CD4-positive, alpha-beta memory T cell (primary cell): ENCODE measurements at regions of chr2 and their contacts with region 1.

Region 1: DNA sequence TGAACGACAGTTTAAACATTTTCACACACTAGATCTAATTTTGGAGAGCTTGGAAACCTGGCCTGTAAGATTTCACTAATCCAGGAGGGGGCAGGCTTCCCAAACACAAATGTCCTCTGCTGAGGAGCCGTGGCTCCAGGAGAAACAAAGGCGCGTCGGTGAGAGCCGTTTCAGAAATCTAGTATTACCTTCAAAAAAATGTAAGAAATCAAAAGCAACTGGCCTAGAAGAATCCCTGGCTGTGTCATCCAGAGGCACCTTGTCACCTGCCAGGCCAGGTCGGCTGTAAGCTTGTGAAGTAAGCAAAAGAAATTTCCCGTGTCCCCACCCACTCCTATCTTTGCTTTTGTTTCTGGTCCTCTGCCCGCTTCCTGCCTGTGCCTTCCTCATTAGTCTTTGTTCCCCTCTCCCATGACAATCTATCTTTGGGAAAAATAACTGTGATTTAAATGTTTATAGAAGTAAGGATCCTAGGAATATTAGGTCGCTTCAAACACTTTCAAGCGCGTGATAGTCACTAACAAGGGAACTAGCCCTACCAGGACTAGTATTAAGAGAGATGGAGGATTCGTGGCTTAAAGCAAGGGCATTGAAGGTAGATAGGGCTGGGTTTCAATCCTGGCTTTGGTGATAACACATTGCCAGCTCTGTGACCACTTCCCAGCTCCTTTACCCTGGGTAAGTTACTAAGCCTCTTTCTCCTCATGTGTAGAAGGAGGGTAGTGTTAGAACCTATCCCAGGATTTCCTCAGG is 99.5 kb upstream of the STK39 start:
- DNase-seq: peak; percentile 63 to 69 (median 64)
- H3K4me3 ChIP-seq: peak overlapping the region in 1 of 2 donors; percentile 51
- H3K4me3 Mint-ChIP-seq: peak overlapping the region; percentile 83 to 95 (median 88)
- H3K27ac ChIP-seq: no peak overlapping the region
- H3K27ac Mint-ChIP-seq: peak overlapping the region in 3 of 7 donors; percentile 64 to 81 (median 76)
- H3K4me1 ChIP-seq: no peaks in the 10 kb centered on the region
- H3K4me1 Mint-ChIP-seq: peaks cover 5 to 7% (median 6%) of the 10 kb centered on the region in 4 donors
- H3K27me3 ChIP-seq: no peaks in the 10 kb centered on the region
- H3K27me3 Mint-ChIP-seq: peaks cover under 1 to 7% of the 10 kb centered on the region in 2 donors

Region 2: GRCh38 chr2:168184681-168185513 is 162.0 kb before region 1 on chr2:
- CTCF ChIA-PET with region 1: no interaction called
- POLR2A ChIA-PET with region 1: no interaction called
- intact Hi-C with region 1: no loop called
- DNase-seq: no peak
- H3K4me3 ChIP-seq: no peak overlapping the region
- H3K4me3 Mint-ChIP-seq: no peak overlapping the region
- H3K27ac ChIP-seq: no peak overlapping the region
- H3K27ac Mint-ChIP-seq: no peak overlapping the region
- H3K4me1 ChIP-seq: peaks cover 42% of the 10 kb centered on the region
- H3K4me1 Mint-ChIP-seq: peaks cover 45 to 78% (median 56%) of the 10 kb centered on the region in 4 donors
- H3K27me3 ChIP-seq: no peaks in the 10 kb centered on the region
- H3K27me3 Mint-ChIP-seq: no peaks in the 10 kb centered on the region

Region 3: GRCh38 chr2:168336864-168337263 is 10.0 kb before region 1 on chr2:
- CTCF ChIA-PET with region 1: interaction called, 31 read pairs
- POLR2A ChIA-PET with region 1: no interaction called
- intact Hi-C with region 1: no loop called
- DNase-seq: peak; percentile 46 to 66 (median 58)
- H3K4me3 ChIP-seq: no peak overlapping the region
- H3K4me3 Mint-ChIP-seq: no peak overlapping the region
- H3K27ac ChIP-seq: no peak overlapping the region
- H3K27ac Mint-ChIP-seq: peak overlapping the region in 1 of 7 donors; percentile 38
- H3K4me1 ChIP-seq: peaks cover 4% of the 10 kb centered on the region
- H3K4me1 Mint-ChIP-seq: peaks cover 2 to 8% (median 4%) of the 10 kb centered on the region in 4 donors
- H3K27me3 ChIP-seq: no peaks in the 10 kb centered on the region
- H3K27me3 Mint-ChIP-seq: peaks cover 2 to 4% of the 10 kb centered on the region in 2 donors

Region 4: GRCh38 chr2:168455648-168456520 is 109.0 kb after region 1 on chr2 and contains the start of gene CERS6:
- CTCF ChIA-PET with region 1: interaction called, 3 read pairs
- POLR2A ChIA-PET with region 1: no interaction called
- intact Hi-C with region 1: loop called (anchors 10 kb)
- DNase-seq: peak; percentile 47 to 68 (median 59)
- H3K4me3 ChIP-seq: peak within 1 kb of the TSS; percentile 61 to 69
- H3K4me3 Mint-ChIP-seq: peak within 1 kb of the TSS in 5 of 8 donors; percentile 83 to 91 (median 86)
- H3K27ac ChIP-seq: no peak within 1 kb of the TSS
- H3K27ac Mint-ChIP-seq: peak within 1 kb of the TSS in 3 of 7 donors; percentile 22 to 59 (median 43)
- H3K4me1 ChIP-seq: peaks cover 23% of the 10 kb centered on the region
- H3K4me1 Mint-ChIP-seq: peaks cover 25 to 42% (median 33%) of the 10 kb centered on the region in 4 donors
- H3K27me3 ChIP-seq: no peaks in the 10 kb centered on the region
- H3K27me3 Mint-ChIP-seq: no peaks in the 10 kb centered on the region
- total RNA-seq, gene CERS6: 10.1 to 11.3 TPM

Region 5: GRCh38 chr2:168687314-168687713 is 340.4 kb after region 1 on chr2:
- CTCF ChIA-PET with region 1: interaction called, 16 read pairs
- POLR2A ChIA-PET with region 1: no interaction called
- intact Hi-C with region 1: loop called (anchors 1 kb)
- DNase-seq: peak in 2 of 5 donors; percentile 4 to 5
- H3K4me3 ChIP-seq: no peak overlapping the region
- H3K4me3 Mint-ChIP-seq: no peak overlapping the region
- H3K27ac ChIP-seq: no peak overlapping the region
- H3K27ac Mint-ChIP-seq: no peak overlapping the region
- H3K4me1 ChIP-seq: no peaks in the 10 kb centered on the region
- H3K4me1 Mint-ChIP-seq: peaks cover 0 to 3% (median under 1%) of the 10 kb centered on the region in 4 donors
- H3K27me3 ChIP-seq: no peaks in the 10 kb centered on the region
- H3K27me3 Mint-ChIP-seq: no peaks in the 10 kb centered on the region

Region 6: DNA sequence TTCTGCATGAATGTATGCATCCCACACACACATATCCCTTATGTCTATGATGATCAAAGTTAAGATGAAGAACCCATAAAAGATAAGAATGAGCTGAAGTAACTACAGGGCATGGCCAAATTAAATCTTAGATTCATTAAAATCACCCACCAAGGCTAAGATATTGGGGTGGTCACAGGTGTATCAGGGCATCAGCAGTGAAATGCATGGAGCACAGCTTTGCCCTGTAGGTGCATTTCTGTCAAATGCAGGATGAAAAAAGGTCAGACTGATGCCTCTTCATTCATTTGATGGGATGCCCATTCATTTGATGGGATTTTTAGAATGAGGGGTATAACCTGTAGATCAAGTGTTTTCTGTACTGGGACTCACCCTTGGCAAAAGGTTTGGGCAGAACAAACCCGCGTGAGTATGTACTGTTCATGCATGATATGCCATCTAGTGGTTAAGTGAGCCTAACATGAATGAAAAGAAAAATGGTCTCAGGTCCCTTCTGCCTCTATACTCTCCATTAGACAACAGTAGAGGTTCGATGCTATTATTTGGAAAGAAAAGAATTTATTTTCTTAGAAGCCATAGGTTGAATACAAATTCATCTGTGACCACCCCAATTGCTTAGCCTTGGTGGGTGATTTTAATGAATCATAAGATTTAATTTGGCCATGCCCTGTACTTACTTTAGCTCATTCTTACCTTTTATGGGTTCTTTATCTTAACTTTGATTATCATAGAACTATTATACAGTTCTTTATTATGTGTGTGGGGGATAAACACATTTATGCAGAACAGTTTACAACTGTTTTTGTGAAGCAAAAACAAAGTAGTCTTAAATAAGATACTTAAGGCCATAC is 412.3 kb after region 1 on chr2:
- CTCF ChIA-PET with region 1: interaction called, 123 read pairs
- POLR2A ChIA-PET with region 1: interaction called, 11 read pairs
- intact Hi-C with region 1: loop called (anchors 1 kb)
- DNase-seq: peak; percentile 48 to 54 (median 54)
- H3K4me3 ChIP-seq: no peak overlapping the region
- H3K4me3 Mint-ChIP-seq: peak overlapping the region in 1 of 8 donors; percentile 9
- H3K27ac ChIP-seq: no peak overlapping the region
- H3K27ac Mint-ChIP-seq: peak overlapping the region in 2 of 7 donors; percentile 4 to 42
- H3K4me1 ChIP-seq: peaks cover 51% of the 10 kb centered on the region
- H3K4me1 Mint-ChIP-seq: peaks cover 34 to 51% (median 46%) of the 10 kb centered on the region in 4 donors
- H3K27me3 ChIP-seq: no peaks in the 10 kb centered on the region
- H3K27me3 Mint-ChIP-seq: no peaks in the 10 kb centered on the region

Region 7: DNA sequence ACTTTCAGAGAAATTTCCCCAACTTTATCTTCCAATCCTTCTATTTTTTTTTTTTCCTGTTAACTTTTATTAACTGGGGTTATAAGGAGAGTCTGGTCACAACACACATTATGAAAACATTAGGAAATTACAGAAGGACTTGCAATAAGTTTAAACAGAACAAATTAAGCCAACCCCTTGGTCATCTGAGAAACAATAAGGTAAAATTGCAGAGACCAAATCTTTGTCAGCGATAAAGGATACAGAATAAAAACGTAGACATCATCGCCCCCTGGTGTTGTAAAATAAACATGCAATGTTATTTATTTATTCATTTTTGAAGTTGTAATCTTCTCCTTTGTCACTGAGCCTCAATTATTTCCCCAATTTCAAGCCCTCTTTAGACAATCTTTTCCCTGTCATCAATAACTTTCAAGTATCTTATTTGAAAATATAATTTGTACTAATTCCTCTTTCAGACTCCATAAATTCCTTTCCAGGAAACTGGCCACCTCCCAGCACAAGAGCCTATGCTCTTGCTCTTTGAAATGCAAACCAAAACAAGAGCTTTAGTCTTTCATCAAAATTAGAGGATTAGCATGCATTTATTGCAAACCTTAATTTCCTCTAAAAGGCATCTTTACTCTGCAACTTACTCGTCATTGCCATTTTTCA is 573.7 kb after region 1 on chr2:
- CTCF ChIA-PET with region 1: interaction called, 61 read pairs
- POLR2A ChIA-PET with region 1: no interaction called
- intact Hi-C with region 1: loop called (anchors 1 kb)
- DNase-seq: peak in 4 of 5 donors; percentile 34 to 47 (median 43)
- H3K4me3 ChIP-seq: no peak overlapping the region
- H3K4me3 Mint-ChIP-seq: no peak overlapping the region
- H3K27ac ChIP-seq: no peak overlapping the region
- H3K27ac Mint-ChIP-seq: no peak overlapping the region
- H3K4me1 ChIP-seq: peaks cover 10% of the 10 kb centered on the region
- H3K4me1 Mint-ChIP-seq: peaks cover 0 to 8% (median 7%) of the 10 kb centered on the region in 4 donors
- H3K27me3 ChIP-seq: no peaks in the 10 kb centered on the region
- H3K27me3 Mint-ChIP-seq: peaks cover 4 to 24% of the 10 kb centered on the region in 2 donors